ENCODE measurements at regions of chr1 and their contacts with region 1.

Region 1: GRCh38 chr1:53047737-53048732 is 14.0 kb upstream of the PODN start:
- DNase-seq: peak; percentile 94
- H3K4me3 ChIP-seq: peak overlapping the region in 1 of 3 experiments; percentile 14
- H3K27ac ChIP-seq: peak overlapping the region; percentile 95
- H3K4me1 ChIP-seq: peaks cover 46% of the 10 kb centered on the region
- H3K27me3 ChIP-seq: no peaks in the 10 kb centered on the region
- CTCF ChIP-seq: no peak
- POLR2A ChIP-seq: no peak

Region 2: DNA sequence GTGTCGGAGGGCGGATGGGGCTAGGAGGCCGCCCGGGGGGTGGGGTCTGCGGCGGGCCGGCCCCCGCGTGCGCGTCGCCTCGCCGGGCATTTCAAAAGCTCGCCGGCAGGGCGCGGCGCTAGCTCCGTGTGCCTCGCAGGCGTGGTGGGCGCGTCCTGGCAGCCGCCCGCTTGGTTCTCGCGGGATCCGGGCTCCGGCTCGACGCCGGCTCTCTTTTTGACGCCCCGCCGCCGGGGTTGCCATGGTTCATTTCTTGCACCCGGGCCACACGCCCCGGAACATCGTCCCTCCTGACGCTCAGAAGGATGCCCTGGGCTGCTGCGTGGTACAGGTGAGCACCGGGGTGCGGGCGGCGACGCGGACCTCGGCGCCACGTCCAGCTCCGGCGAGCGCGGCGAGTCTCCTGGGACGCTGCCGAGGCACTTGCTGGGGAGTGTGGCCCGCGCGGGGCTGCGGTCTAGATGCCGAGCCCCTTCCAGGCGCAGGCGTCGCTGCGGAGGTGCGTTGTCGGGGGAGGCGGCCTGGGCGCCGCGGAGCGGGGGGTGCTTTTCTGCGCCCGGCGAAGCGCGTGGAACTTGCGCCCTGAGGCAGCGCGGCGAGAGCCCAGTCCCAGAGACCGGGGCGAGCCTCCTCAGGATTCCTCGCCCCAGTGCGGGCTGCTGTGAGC is 205.3 kb before region 1 on chr1 and contains the start of gene ZYG11A:
- CTCF ChIA-PET with region 1: interaction called, 3 read pairs
- POLR2A ChIA-PET with region 1: no interaction called
- dilution Hi-C with region 1: no loop called
- intact Hi-C with region 1: loop called (anchors 2 kb)
- DNase-seq: peak; percentile 81
- H3K4me3 ChIP-seq: peak within 1 kb of the TSS; percentile 28 to 76 (median 62)
- H3K27ac ChIP-seq: no peak within 1 kb of the TSS
- H3K4me1 ChIP-seq: no peaks in the 10 kb centered on the region
- H3K27me3 ChIP-seq: no peaks in the 10 kb centered on the region
- CTCF ChIP-seq: peak in 1 of 2 donors; percentile 44
- POLR2A ChIP-seq: no peak
- total RNA-seq, gene ZYG11A: 1.3 and 2.1 TPM in 2 replicates

Region 3: GRCh38 chr1:53014791-53015507 is 33.1 kb before region 1 on chr1:
- CTCF ChIA-PET with region 1: interaction called, 6 read pairs
- POLR2A ChIA-PET with region 1: no interaction called
- dilution Hi-C with region 1: no loop called
- intact Hi-C with region 1: loop called (anchors 2 kb)
- DNase-seq: peak; percentile 86
- H3K4me3 ChIP-seq: peak overlapping the region; percentile 59 to 78 (median 73)
- H3K27ac ChIP-seq: no peak overlapping the region
- H3K4me1 ChIP-seq: peaks cover 7% of the 10 kb centered on the region
- H3K27me3 ChIP-seq: no peaks in the 10 kb centered on the region
- CTCF ChIP-seq: no peak
- POLR2A ChIP-seq: peak; percentile 37

Region 4: DNA sequence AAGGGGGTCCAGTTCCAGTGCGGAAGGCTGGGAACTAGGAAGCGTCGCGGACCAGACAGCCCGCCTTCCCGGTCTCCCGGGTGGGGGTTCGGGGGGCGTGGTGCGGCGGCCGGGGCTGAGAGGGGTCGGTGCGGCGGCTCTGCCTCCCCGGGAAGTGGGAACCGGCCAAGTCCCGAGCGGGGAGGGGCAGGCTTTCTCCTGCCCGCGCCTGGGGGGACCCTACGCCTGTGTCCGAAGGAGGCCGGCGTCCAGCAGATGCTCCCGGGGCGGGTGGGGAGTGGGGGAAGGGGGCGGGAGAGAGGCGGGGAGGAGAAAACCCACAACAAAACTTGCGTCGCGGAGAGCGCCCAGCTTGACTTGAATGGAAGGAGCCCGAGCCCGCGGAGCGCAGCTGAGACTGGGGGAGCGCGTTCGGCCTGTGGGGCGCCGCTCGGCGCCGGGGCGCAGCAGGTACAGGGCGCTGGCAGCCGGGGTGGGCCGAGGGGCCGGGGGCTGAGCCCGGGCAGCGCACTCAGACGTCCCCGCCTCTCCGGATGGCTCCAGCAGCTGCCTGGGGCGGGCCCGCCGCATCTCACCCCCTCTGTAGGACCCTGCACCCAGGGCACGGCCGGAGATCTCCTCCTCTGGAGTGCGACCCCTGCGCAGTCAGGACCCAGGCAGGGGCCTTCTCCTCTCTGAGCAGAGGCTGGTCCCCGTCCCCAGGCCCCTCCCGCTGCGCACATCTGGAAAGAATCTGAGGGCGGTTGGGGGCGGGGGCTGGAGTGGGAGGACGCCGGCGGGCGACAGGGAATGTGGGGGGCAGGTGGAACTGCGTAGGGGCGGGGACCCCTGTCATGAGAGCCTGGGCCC is 14.0 kb after region 1 on chr1 and contains the start of gene PODN:
- CTCF ChIA-PET with region 1: interaction called, 26 read pairs
- POLR2A ChIA-PET with region 1: interaction called, 4 read pairs
- dilution Hi-C with region 1: no loop called
- intact Hi-C with region 1: loop called (anchors 1 kb)
- DNase-seq: no peak
- H3K4me3 ChIP-seq: peak within 1 kb of the TSS; percentile 27 to 47 (median 30)
- H3K27ac ChIP-seq: no peak within 1 kb of the TSS
- H3K4me1 ChIP-seq: peaks cover 8% of the 10 kb centered on the region
- H3K27me3 ChIP-seq: peaks cover 6 to 31% of the 10 kb centered on the region in 2 experiments
- CTCF ChIP-seq: no peak
- POLR2A ChIP-seq: no peak
- total RNA-seq, gene PODN: 1.5 and 2.0 TPM in 2 replicates

Region 5: GRCh38 chr1:53091841-53092645 is 44.0 kb after region 1 on chr1:
- CTCF ChIA-PET with region 1: no interaction called
- POLR2A ChIA-PET with region 1: no interaction called
- dilution Hi-C with region 1: no loop called
- intact Hi-C with region 1: no loop called
- DNase-seq: no peak
- H3K4me3 ChIP-seq: no peak overlapping the region
- H3K27ac ChIP-seq: no peak overlapping the region
- H3K4me1 ChIP-seq: no peaks in the 10 kb centered on the region
- H3K27me3 ChIP-seq: no peaks in the 10 kb centered on the region
- CTCF ChIP-seq: no peak
- POLR2A ChIP-seq: no peak

Region 6: DNA sequence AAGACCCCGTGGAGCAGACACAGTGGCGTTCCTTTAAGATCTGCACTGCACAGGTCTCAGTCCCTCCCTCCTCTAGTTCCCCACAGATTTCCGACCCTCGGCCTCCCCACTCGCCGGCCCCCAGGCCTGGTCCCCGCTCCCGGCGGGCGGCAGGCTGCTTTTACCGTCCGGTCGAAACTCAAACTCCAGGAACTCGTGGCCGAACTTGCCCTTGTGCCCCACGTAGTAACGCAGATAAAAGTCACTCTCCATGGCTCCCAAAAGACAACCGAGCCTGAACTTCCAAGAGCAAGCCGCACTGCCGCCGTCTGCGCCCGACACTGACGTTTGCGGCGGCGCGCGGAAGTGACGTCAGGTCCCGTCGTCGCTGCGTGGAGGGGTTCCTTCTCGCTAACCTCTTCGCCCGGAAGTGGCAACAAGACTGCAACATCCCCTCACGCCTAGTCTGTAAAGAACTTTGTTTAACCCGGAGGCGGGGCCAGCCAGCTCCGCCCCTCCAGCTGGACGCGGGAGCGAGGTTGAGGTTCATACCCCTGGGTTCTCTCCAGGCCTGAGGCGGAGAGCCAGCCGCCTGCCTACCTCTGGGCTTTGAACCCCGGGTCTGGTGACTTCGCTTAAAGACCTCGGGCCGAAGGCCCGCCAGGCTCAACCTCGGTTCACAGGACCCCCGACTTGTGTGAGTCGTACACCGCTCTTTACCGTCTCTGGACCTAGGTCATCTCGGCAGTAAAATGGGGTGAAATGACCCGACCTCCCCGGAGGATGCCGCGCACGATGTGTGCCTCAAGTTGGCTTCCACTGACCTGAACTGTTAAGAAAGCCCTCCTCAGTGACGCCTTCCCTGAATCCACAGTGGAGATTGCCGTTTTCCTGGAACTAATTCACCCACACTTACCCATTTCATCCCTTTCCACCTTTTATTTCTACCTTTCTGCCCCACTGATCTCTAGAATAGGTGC is 190.4 kb after region 1 on chr1 and contains the start of gene MAGOH:
- CTCF ChIA-PET with region 1: no interaction called
- POLR2A ChIA-PET with region 1: no interaction called
- dilution Hi-C with region 1: no loop called
- intact Hi-C with region 1: no loop called
- DNase-seq: peak; percentile 97
- H3K4me3 ChIP-seq: peak within 1 kb of the TSS; percentile 82 to 97 (median 89)
- H3K27ac ChIP-seq: peak within 1 kb of the TSS; percentile 81
- H3K4me1 ChIP-seq: peaks cover 8% of the 10 kb centered on the region
- H3K27me3 ChIP-seq: no peaks in the 10 kb centered on the region
- CTCF ChIP-seq: no peak
- POLR2A ChIP-seq: peak; percentile 85
- total RNA-seq, gene MAGOH: 59.8 and 60.1 TPM in 2 replicates

Measured in endothelial cell of umbilical vein (primary cell).